ENCODE measurements at regions of chr3 and their contacts with region 1.

Region 1: DNA sequence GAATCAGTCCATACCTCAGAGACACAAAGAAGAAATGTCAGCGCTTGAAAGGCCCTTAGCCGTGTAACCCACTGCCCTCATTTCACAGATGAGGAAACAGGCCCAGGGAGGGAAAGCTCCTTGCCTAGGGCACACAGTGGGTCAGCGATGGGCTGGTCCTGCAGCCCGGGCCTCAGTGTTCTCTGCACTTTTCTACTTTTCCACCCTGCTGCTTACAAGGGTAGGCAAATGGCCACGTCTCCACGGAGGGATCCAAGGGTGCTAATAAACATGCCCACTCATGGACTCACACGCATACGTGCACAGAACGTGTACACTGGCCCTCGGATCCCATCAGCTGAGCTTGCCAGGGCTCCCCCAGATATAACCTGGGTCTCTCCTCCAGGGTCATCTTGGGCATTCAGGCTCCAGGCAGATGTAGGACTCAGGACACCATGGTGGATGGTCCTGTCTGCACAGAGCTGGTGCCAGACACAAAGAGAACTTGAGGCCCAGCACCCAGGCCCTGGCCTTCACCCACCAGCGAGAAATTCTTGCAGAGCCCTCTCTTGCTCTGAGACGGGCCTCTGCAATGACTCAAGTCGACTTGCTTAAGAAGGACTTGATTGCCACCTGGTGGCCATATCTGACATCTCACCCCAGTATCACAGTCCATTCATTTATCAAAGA is 34.5 kb upstream of the VPS8 start:
- DNase-seq: peak; percentile 85 to 91 (median 85)
- H3K4me3 ChIP-seq: no peak overlapping the region
- H3K4me3 Mint-ChIP-seq: no peak overlapping the region
- H3K27ac ChIP-seq: no peak overlapping the region
- H3K27ac Mint-ChIP-seq: no peak overlapping the region
- H3K4me1 ChIP-seq: peaks cover 2 to 11% of the 10 kb centered on the region in 2 donors
- H3K4me1 Mint-ChIP-seq: peaks cover 13% of the 10 kb centered on the region
- H3K27me3 ChIP-seq: no peaks in the 10 kb centered on the region
- H3K27me3 Mint-ChIP-seq: peaks cover 9 to 14% (median 10%) of the 10 kb centered on the region in 3 donors
- CTCF ChIP-seq: peak; percentile 90

Region 2: GRCh38 chr3:184371570-184372018 is 405.9 kb before region 1 on chr3:
- intact Hi-C with region 1: loop called in 1 of 2 experiments (anchors 10 kb)
- DNase-seq: peak; percentile 71 to 80 (median 71)
- H3K4me3 ChIP-seq: no peak overlapping the region
- H3K4me3 Mint-ChIP-seq: no peak overlapping the region
- H3K27ac ChIP-seq: no peak overlapping the region
- H3K27ac Mint-ChIP-seq: no peak overlapping the region
- H3K4me1 ChIP-seq: peaks cover 0 to 6% of the 10 kb centered on the region in 2 donors
- H3K4me1 Mint-ChIP-seq: peaks cover 8% of the 10 kb centered on the region
- H3K27me3 ChIP-seq: peaks cover 0 to 16% of the 10 kb centered on the region in 2 donors
- H3K27me3 Mint-ChIP-seq: peaks cover 16 to 40% (median 29%) of the 10 kb centered on the region in 3 donors
- CTCF ChIP-seq: peak; percentile 95

Region 3: GRCh38 chr3:184561061-184561912 is 216.2 kb before region 1 on chr3 and contains the start of gene EPHB3:
- intact Hi-C with region 1: loop called in 1 of 2 experiments (anchors 1 kb)
- DNase-seq: peak; percentile 95 to 97 (median 97)
- H3K4me3 ChIP-seq: peak within 1 kb of the TSS; percentile 49 to 83 (median 60)
- H3K4me3 Mint-ChIP-seq: peak within 1 kb of the TSS; percentile 86 to 90
- H3K27ac ChIP-seq: peak within 1 kb of the TSS in 1 of 2 donors; percentile 12
- H3K27ac Mint-ChIP-seq: peak within 1 kb of the TSS; percentile 16 to 76 (median 63)
- H3K4me1 ChIP-seq: peaks cover 21 to 42% of the 10 kb centered on the region in 2 donors
- H3K4me1 Mint-ChIP-seq: peaks cover 34% of the 10 kb centered on the region
- H3K27me3 ChIP-seq: peaks cover 0 to 18% of the 10 kb centered on the region in 2 donors
- H3K27me3 Mint-ChIP-seq: peaks cover 18 to 46% (median 30%) of the 10 kb centered on the region in 3 donors
- CTCF ChIP-seq: peak; percentile 100
- polyA plus RNA-seq, gene EPHB3: 0.71 to 1.2 (median 0.80) TPM

Region 4: GRCh38 chr3:184727357-184728009 is 50.0 kb before region 1 on chr3:
- intact Hi-C with region 1: loop called in 1 of 2 experiments (anchors 5 kb)
- DNase-seq: peak; percentile 52 to 75 (median 70)
- H3K4me3 ChIP-seq: no peak overlapping the region
- H3K4me3 Mint-ChIP-seq: no peak overlapping the region
- H3K27ac ChIP-seq: no peak overlapping the region
- H3K27ac Mint-ChIP-seq: peak overlapping the region in 1 of 7 donors; percentile 14
- H3K4me1 ChIP-seq: no peaks in the 10 kb centered on the region
- H3K4me1 Mint-ChIP-seq: peaks cover 1% of the 10 kb centered on the region
- H3K27me3 ChIP-seq: no peaks in the 10 kb centered on the region
- H3K27me3 Mint-ChIP-seq: peaks cover 0 to 7% (median 4%) of the 10 kb centered on the region in 3 donors
- CTCF ChIP-seq: peak; percentile 86